ENCODE measurements at regions of chr5 and their contacts with region 1.

Region 1: GRCh38 chr5:101878190-101878589 is 417.9 kb downstream of the SLCO4C1 start:
- DNase-seq: no peak

Region 2: DNA sequence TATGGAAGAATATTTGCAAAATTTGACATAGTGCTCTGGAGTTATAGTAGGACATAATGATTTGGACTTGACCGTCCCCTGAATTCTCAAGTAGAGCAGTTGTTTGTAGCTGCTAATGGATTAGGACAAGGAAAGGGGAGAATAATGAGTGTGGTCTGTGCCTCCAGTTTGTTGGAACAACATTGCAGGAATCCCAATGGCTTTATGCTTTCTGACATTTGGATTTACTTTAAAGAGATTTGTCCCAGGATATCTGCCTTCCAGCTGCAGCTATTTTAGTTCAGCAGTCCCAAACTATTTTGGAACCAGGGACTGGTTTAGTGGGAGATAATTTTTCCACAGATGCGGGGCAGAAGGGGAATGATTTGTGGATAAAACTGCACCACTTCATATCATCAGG is 230.3 kb before region 1 on chr5:
- intact Hi-C with region 1: no loop called
- DNase-seq: no peak

Region 3: DNA sequence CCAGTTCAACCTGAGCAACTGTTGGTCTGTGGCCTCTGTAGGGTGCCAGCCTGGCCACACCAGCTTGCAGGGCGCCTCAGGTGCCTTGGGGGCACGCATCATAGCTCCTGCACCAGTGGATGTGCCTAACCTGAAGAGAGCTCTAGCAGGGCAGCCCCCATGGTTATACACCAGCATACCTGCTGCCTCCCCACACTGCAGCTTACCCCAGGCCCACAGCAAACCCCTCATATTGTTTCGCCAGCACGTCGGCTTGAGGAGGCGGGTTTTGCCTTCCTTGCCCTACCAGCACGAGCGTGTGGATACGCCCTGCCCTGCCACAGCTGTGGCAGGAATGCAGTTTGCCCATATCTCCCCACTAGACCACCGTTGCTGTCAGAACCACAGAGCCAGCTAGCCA is 18.0 kb before region 1 on chr5:
- intact Hi-C with region 1: loop called in 1 of 2 experiments (anchors 1 kb)
- DNase-seq: peak; percentile 43

Region 4: DNA sequence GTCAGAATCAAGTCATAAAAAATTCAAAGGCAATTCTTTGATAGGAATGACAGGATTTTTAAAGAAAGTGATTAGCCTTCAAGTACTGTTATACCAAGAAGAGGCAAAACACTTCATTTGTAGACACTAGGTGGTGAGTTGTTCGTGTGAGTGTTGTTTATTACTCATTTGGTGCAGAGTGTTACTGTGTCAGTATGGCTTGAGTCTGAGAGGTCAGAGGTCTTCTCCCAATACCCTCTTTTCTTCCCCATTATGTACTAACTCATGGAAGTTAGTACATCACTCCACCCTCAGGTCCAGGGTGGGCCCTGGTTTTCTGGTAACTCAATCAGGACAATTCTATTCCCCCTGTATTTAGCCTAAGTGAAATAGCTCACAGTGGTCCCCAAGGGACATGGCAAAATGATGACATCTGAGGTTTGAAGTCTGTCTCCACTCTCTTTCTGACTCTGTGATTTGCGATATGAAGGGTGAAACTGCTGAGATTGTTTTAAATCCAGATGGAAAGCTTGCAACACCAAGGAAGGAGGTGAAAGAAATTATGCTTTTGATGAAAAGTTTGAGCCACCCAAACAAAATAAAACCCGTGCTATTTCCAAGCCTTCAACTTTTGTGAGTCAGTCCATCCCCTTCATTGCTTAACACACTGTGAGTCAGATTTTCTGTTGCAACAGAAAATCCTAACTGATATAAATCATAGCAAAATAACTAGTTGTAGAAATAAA is 1627.6 kb after region 1 on chr5:
- intact Hi-C with region 1: loop called in 1 of 2 experiments (anchors 10 kb)
- DNase-seq: no peak

Measured in posterior vena cava (tissue), 2 donors.